ENCODE measurements at regions of chr13 and their contacts with region 1.

Region 1: GRCh38 chr13:37109051-37109678 is 3.7 kb upstream of the CSNK1A1L start:
- DNase-seq: peak; percentile 75
- H3K4me3 ChIP-seq: no peak overlapping the region
- H3K27ac ChIP-seq: no peak overlapping the region
- H3K4me1 ChIP-seq: no peaks in the 10 kb centered on the region
- H3K27me3 ChIP-seq: no peaks in the 10 kb centered on the region
- CTCF ChIP-seq: peak; percentile 86

Region 2: GRCh38 chr13:37270226-37271001 is 161.2 kb after region 1 on chr13:
- CTCF ChIA-PET with region 1: interaction called, 8 read pairs
- POLR2A ChIA-PET with region 1: no interaction called
- intact Hi-C with region 1: loop called (anchors 2 kb)
- DNase-seq: peak; percentile 45
- H3K4me3 ChIP-seq: no peak overlapping the region
- H3K27ac ChIP-seq: no peak overlapping the region
- H3K4me1 ChIP-seq: no peaks in the 10 kb centered on the region
- H3K27me3 ChIP-seq: peaks cover 3% of the 10 kb centered on the region
- CTCF ChIP-seq: peak; percentile 58

Region 3: DNA sequence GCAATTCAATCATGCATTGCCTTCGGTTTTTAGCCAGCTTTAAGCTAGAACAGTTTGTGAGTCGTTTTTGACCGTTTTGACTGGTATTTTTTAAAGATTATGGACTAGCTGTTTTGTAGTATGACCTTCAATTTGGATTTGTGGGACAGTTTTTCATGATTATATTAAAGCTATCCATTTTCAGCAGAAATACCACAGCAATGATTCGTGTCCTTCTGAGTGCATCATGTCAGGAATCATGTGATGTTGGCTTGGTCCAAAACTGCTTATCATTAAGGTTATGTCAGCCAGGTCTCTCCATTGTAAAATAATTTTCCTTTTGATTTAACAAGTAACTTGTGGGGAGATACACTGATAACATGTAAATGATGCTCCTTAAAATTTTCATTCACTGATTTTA is 260.5 kb after region 1 on chr13:
- CTCF ChIA-PET with region 1: no interaction called
- POLR2A ChIA-PET with region 1: no interaction called
- intact Hi-C with region 1: loop called (anchors 10 kb)
- DNase-seq: no peak
- H3K4me3 ChIP-seq: no peak overlapping the region
- H3K27ac ChIP-seq: no peak overlapping the region
- H3K4me1 ChIP-seq: no peaks in the 10 kb centered on the region
- H3K27me3 ChIP-seq: peaks cover 12% of the 10 kb centered on the region
- CTCF ChIP-seq: no peak

Region 4: GRCh38 chr13:37602747-37603381 is 493.7 kb after region 1 on chr13:
- CTCF ChIA-PET with region 1: no interaction called
- POLR2A ChIA-PET with region 1: no interaction called
- intact Hi-C with region 1: loop called (anchors 1 kb)
- DNase-seq: peak; percentile 53
- H3K4me3 ChIP-seq: no peak overlapping the region
- H3K27ac ChIP-seq: no peak overlapping the region
- H3K4me1 ChIP-seq: no peaks in the 10 kb centered on the region
- H3K27me3 ChIP-seq: no peaks in the 10 kb centered on the region
- CTCF ChIP-seq: peak; percentile 77